Activated CD4-positive, alpha-beta T cell treated with anti-CD3 and anti-CD28 coated beads, Interleukin-2, amount 10 ng/mL, durations not matched to agents 7 days and 5 days (primary cell): ENCODE measurements at regions of chr1 and their contacts with region 1.

Region 1: GRCh38 chr1:85259118-85259911 is at the start of gene C1orf52:
- DNase-seq: peak; percentile 97
- H3K4me3 Mint-ChIP-seq: peak within 1 kb of the TSS; percentile 96
- H3K27ac Mint-ChIP-seq: peak within 1 kb of the TSS; percentile 97
- H3K4me1 Mint-ChIP-seq: peaks cover 37% of the 10 kb centered on the region
- H3K27me3 Mint-ChIP-seq: no peaks in the 10 kb centered on the region
- total RNA-seq, gene C1orf52: 24.5 to 26.4 TPM

Region 2: GRCh38 chr1:84936116-84936810 is 323.1 kb before region 1 on chr1:
- CTCF ChIA-PET with region 1: interaction called, 10 read pairs
- POLR2A ChIA-PET with region 1: no interaction called
- DNase-seq: peak; percentile 58
- H3K4me3 Mint-ChIP-seq: no peak overlapping the region
- H3K27ac Mint-ChIP-seq: no peak overlapping the region
- H3K4me1 Mint-ChIP-seq: peaks cover 7% of the 10 kb centered on the region
- H3K27me3 Mint-ChIP-seq: no peaks in the 10 kb centered on the region

Region 3: GRCh38 chr1:84944767-84945486 is 314.4 kb before region 1 on chr1:
- CTCF ChIA-PET with region 1: interaction called, 35 read pairs
- POLR2A ChIA-PET with region 1: no interaction called
- DNase-seq: peak; percentile 91
- H3K4me3 Mint-ChIP-seq: peak overlapping the region; percentile 77
- H3K27ac Mint-ChIP-seq: peak overlapping the region; percentile 89
- H3K4me1 Mint-ChIP-seq: peaks cover 23% of the 10 kb centered on the region
- H3K27me3 Mint-ChIP-seq: no peaks in the 10 kb centered on the region

Region 4: GRCh38 chr1:85109475-85109874 is 149.8 kb before region 1 on chr1:
- CTCF ChIA-PET with region 1: interaction called, 19 read pairs
- POLR2A ChIA-PET with region 1: no interaction called
- DNase-seq: peak; percentile 44
- H3K4me3 Mint-ChIP-seq: no peak overlapping the region
- H3K27ac Mint-ChIP-seq: no peak overlapping the region
- H3K4me1 Mint-ChIP-seq: no peaks in the 10 kb centered on the region
- H3K27me3 Mint-ChIP-seq: peaks cover 20% of the 10 kb centered on the region

Region 5: DNA sequence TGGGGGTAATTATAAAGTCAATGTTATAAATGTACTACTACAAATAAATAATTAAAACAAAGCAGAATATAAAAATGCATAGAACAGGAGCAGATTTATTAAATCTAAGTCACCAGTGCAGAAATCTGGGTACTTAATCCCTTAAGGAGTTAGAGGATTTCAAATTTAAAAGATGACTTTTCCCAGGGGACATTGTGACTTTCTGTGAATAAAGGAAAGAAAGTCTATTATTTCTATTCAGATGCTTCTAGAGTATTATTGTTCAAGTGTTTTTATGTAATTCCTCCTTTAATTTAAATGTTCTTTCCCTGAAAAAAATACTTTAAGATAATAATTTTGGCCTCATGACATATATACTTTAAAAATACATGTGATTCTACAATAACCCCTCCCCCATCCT is 101.9 kb before region 1 on chr1:
- CTCF ChIA-PET with region 1: no interaction called
- POLR2A ChIA-PET with region 1: no interaction called
- DNase-seq: no peak
- H3K4me3 Mint-ChIP-seq: no peak overlapping the region
- H3K27ac Mint-ChIP-seq: no peak overlapping the region
- H3K4me1 Mint-ChIP-seq: peaks cover 11% of the 10 kb centered on the region
- H3K27me3 Mint-ChIP-seq: no peaks in the 10 kb centered on the region

Region 6: GRCh38 chr1:85240174-85240601 is 19.1 kb before region 1 on chr1:
- CTCF ChIA-PET with region 1: interaction called, 10 read pairs
- POLR2A ChIA-PET with region 1: no interaction called
- DNase-seq: peak; percentile 13
- H3K4me3 Mint-ChIP-seq: no peak overlapping the region
- H3K27ac Mint-ChIP-seq: peak overlapping the region; percentile 69
- H3K4me1 Mint-ChIP-seq: peaks cover 16% of the 10 kb centered on the region
- H3K27me3 Mint-ChIP-seq: no peaks in the 10 kb centered on the region

Region 7: DNA sequence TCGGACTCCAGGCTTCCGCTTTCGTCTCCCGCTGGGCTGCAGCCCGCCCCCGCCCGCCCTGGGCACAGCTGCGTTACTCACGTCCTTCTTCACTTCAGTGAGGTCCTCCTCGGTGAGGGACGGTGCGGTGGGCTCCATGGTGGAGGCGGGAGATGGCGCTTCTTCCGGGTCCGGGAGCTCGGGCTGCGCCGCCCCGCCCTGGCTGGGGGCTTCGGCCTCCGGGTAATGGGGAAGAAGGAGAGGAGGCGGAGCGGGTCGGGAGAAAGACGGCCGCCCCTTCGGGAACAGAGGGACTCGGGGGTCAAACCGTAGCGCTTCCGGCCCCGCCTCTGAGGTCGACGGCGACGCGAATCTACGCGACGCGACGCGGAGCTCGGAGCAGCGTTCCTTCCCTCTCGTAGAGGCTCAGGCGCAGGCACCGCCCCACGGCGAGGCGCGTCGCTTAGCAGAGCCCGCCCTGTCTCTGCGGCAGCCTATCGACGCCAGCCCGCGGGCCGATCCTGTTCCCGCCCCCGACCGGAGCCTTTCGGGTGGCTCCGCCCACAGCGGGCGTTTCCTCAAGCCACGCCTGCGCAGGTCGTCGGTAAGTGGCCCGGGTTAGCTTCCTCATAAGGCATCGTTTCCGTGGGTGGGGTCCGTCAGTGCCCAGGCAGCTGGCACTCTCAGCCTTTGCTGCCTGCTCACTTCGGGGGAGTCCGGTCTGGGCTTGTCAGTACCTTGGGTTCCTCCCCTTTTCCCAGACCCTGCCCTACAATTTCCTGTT is 17.1 kb after region 1 on chr1 and contains the start of gene BCL10:
- CTCF ChIA-PET with region 1: interaction called, 46 read pairs
- POLR2A ChIA-PET with region 1: interaction called, 13 read pairs
- DNase-seq: peak; percentile 97
- H3K4me3 Mint-ChIP-seq: peak within 1 kb of the TSS; percentile 83
- H3K27ac Mint-ChIP-seq: peak within 1 kb of the TSS; percentile 95
- H3K4me1 Mint-ChIP-seq: peaks cover 50% of the 10 kb centered on the region
- H3K27me3 Mint-ChIP-seq: peaks cover 19% of the 10 kb centered on the region
- total RNA-seq, gene BCL10: 26.3 to 29.9 TPM

Region 8: GRCh38 chr1:85284202-85284601 is 24.9 kb after region 1 on chr1:
- CTCF ChIA-PET with region 1: interaction called, 10 read pairs
- POLR2A ChIA-PET with region 1: no interaction called
- DNase-seq: no peak
- H3K4me3 Mint-ChIP-seq: no peak overlapping the region
- H3K27ac Mint-ChIP-seq: no peak overlapping the region
- H3K4me1 Mint-ChIP-seq: peaks cover under 1% of the 10 kb centered on the region
- H3K27me3 Mint-ChIP-seq: peaks cover 34% of the 10 kb centered on the region

Region 9: GRCh38 chr1:85448358-85448757 is 189.0 kb after region 1 on chr1:
- CTCF ChIA-PET with region 1: no interaction called
- POLR2A ChIA-PET with region 1: no interaction called
- DNase-seq: no peak
- H3K4me3 Mint-ChIP-seq: no peak overlapping the region
- H3K27ac Mint-ChIP-seq: no peak overlapping the region
- H3K4me1 Mint-ChIP-seq: no peaks in the 10 kb centered on the region
- H3K27me3 Mint-ChIP-seq: no peaks in the 10 kb centered on the region